ENCODE measurements at regions of chr5 and their contacts with region 1.

Region 1: GRCh38 chr5:141524604-141525597 is 36.0 kb downstream of the PCDHGC5 start:
- DNase-seq: peak; percentile 93

Region 2: GRCh38 chr5:141320225-141321169 is 204.4 kb before region 1 on chr5 and contains the start of gene TAF7:
- intact Hi-C with region 1: loop called in 1 of 2 experiments (anchors 10 kb)
- DNase-seq: peak; percentile 98
- total RNA-seq, gene TAF7: 57.9 to 63.1 TPM

Region 3: DNA sequence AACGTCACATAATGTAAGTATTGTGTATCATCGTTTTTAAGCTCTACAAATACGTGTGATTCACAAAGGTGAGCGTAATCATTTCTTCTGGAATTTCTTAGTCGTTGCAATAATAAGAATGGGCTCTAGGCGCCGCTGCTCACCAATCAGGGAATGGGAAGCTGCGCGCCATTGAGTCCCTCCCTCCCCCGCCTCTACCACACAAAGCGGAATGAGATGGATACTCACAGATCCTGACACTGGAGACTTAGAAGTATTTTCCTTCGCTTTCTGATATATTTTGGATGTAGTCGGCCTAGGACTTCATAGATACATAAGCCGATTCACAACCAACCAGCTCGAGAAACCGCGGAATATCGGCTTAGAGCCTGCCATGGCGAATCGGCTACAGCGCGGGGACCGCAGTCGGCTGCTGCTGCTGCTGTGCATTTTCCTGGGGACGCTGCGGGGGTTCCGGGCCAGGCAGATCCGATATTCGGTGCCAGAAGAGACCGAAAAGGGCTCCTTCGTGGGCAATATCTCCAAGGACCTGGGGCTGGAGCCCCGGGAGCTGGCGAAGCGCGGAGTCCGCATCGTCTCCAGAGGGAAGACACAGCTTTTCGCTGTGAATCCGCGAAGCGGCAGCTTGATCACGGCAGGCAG is 103.9 kb before region 1 on chr5 and contains the start of gene PCDHGA11:
- intact Hi-C with region 1: loop called in 1 of 2 experiments (anchors 10 kb)
- DNase-seq: peak; percentile 80
- total RNA-seq, gene PCDHGA11: 4.6 to 4.8 TPM

Region 4: DNA sequence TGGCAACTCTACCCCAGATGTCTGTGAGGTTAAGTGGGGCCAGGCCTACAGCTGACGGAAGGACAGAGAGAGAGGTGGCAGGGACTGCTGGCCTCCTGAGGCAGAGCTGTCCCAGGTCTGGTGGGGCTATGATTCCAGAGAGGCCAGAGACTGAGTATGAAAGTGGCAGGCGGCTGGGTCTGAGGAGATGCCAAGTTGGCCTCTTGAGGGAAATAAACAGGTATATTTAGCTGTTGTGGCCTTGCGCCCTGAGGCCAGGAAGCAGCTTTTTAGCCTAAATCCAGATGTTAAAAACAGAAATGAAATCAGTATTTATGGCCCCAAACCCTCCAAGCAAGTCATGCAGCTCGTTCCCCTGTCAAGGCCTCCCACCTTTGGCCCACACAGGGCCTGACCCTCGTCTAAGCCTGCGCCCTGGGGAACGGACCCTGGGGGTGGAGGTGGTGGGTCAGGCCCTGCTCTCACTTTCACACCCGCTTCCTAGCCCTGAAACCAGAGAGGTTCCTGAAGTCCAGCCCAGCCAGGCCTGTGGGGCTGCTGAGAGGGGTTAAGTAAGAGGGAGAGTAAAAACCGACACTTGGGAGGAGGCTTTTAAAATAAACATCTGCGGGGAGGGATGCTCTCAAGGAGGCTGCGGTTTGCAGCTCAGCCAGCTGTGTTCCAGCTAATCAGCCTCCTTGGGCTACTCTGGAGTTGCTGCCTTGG is 17.4 kb before region 1 on chr5:
- intact Hi-C with region 1: no loop called
- DNase-seq: no peak